ENCODE measurements at regions of chr1 and their contacts with region 1.

Region 1: DNA sequence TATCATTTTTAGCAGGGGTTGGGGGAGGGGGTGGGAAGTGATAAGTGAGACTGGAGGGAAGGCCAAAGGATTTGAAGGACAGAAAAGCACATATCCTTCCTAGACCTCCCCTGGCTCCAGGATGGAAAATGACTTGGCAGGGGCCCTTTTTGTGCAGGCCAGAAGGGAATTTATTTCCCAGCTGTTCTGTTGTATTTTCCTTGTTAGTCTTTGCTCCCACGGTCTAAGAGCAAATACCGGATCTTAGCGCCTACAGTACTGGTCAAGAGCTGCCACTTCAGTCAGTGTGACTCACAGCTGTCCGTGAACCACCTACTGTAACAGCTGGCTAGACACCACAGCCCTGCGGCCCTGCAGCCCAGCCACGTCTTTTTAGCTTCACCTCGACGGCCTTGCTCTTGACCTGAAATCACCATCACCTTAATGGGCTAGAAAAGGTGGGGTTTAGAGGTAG is 51.0 kb upstream of the ERRFI1 start:
- DNase-seq: no peak
- ATAC-seq: peak; percentile 93
- H3K4me3 ChIP-seq: no peak overlapping the region
- H3K27ac ChIP-seq: peak overlapping the region; percentile 100
- H3K4me1 ChIP-seq: peaks cover 71% of the 10 kb centered on the region
- H3K27me3 ChIP-seq: no peaks in the 10 kb centered on the region
- CTCF ChIP-seq: no peak

Region 2: DNA sequence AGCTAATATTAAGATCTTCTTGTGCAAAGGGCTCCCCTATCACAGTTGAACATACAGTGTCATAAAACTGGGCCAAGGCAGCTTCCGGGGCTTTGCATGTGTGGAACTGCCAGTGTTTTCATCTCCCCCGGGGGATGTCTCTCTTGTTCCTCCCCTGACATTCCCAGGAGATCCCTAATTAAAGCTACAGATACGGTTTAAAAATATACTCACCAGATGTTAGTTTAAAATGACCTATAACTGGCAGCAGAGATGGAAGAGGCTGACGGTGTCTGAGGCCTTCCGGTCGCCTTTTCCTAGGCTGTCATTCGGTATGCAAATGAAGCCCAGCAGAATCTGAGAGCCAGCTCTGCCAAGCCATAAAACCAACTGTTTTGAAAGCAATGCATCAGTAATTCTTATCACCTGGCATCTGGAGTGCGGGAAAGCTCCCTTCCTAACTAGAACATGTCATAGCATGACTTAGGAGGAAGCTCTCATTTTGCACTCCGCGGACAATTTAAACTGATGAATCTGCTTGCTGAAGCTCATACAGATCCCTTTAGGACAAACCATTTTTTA is 742.6 kb before region 1 on chr1:
- CTCF ChIA-PET with region 1: no interaction called
- POLR2A ChIA-PET with region 1: no interaction called
- in situ Hi-C with region 1: no loop called
- intact Hi-C with region 1: no loop called
- DNase-seq: no peak
- ATAC-seq: no peak
- H3K4me3 ChIP-seq: no peak overlapping the region
- H3K27ac ChIP-seq: no peak overlapping the region
- H3K4me1 ChIP-seq: no peaks in the 10 kb centered on the region
- H3K27me3 ChIP-seq: no peaks in the 10 kb centered on the region
- CTCF ChIP-seq: no peak

Region 3: DNA sequence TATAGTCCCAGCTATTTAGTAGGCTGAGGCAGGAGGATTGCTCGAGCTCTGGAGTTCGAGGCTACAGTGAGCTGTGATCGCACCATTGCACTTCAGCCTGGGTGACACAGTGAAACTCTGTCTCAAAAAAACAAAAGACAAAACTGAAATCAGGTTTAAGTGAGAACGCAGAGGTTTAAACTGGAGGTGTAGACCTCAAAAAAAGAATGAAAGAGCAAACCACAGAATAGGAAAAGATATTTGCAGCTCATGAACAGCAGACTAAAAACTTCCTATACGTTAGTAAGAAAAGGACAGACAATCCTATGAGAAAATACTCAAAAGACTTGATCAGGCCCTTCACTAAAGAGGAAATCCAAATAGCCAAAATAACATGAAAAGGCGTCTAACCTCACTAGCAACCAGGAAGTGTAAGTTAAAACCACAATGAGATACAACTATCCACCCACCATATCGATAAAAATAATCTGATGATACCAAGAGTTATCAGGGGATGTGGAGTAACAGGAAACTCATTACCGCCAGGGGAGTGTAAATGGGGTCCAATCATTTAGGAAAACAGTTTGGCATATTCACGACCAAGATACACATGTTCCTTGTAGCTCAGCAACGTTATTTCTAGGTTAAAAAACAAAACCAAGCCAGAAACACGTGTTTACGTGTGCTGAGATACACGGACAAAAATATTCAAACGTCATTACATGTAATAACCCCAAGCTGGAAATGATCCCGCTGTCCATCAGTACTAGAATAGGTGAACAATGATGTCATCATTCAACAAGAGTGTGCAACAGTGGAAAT is 146.3 kb before region 1 on chr1:
- CTCF ChIA-PET with region 1: no interaction called
- POLR2A ChIA-PET with region 1: no interaction called
- in situ Hi-C with region 1: no loop called
- intact Hi-C with region 1: no loop called
- DNase-seq: no peak
- ATAC-seq: no peak
- H3K4me3 ChIP-seq: no peak overlapping the region
- H3K27ac ChIP-seq: no peak overlapping the region
- H3K4me1 ChIP-seq: no peaks in the 10 kb centered on the region
- H3K27me3 ChIP-seq: no peaks in the 10 kb centered on the region
- CTCF ChIP-seq: no peak

Region 4: DNA sequence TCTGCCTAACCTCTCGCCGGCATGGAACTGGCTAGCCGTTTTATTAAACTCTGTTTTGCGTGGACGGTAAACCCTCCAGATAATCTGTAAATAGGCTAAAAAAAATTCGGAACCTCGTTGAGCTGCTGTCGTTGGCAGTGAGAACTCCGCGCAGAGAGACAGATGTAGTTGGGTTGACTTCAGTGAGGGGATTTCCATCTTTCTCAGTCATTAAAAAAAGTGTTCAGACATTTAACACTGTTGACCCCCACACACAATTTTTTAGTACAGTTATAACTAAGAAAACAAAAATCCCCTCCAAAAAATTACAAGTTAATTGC is 115.2 kb before region 1 on chr1:
- CTCF ChIA-PET with region 1: no interaction called
- POLR2A ChIA-PET with region 1: no interaction called
- in situ Hi-C with region 1: no loop called
- intact Hi-C with region 1: no loop called
- DNase-seq: no peak
- ATAC-seq: peak; percentile 2; the same call in 1 of the 2 replicates
- H3K4me3 ChIP-seq: peak overlapping the region; percentile 87 to 96
- H3K27ac ChIP-seq: peak overlapping the region; percentile 99
- H3K4me1 ChIP-seq: peaks cover 22% of the 10 kb centered on the region
- H3K27me3 ChIP-seq: no peaks in the 10 kb centered on the region
- CTCF ChIP-seq: no peak

Region 5: GRCh38 chr1:8266436-8267165 is 189.5 kb after region 1 on chr1:
- CTCF ChIA-PET with region 1: no interaction called
- POLR2A ChIA-PET with region 1: interaction called, 20 read pairs
- in situ Hi-C with region 1: no loop called
- intact Hi-C with region 1: no loop called
- DNase-seq: no peak
- ATAC-seq: no peak
- H3K4me3 ChIP-seq: no peak overlapping the region
- H3K27ac ChIP-seq: peak overlapping the region; percentile 65
- H3K4me1 ChIP-seq: 0 out of 2 replicates have a peak, but pooled peaks cover 3% of the 10 kb centered on the region
- H3K27me3 ChIP-seq: no peaks in the 10 kb centered on the region
- CTCF ChIP-seq: no peak

Region 6: GRCh38 chr1:8702850-8703810 is 626.0 kb after region 1 on chr1:
- CTCF ChIA-PET with region 1: no interaction called
- POLR2A ChIA-PET with region 1: interaction called, 10 read pairs
- in situ Hi-C with region 1: no loop called
- intact Hi-C with region 1: no loop called
- DNase-seq: peak; percentile 82
- ATAC-seq: peak; percentile 95
- H3K4me3 ChIP-seq: peak overlapping the region; percentile 63 to 78
- H3K27ac ChIP-seq: peak overlapping the region; percentile 93
- H3K4me1 ChIP-seq: peaks cover 66% of the 10 kb centered on the region
- H3K27me3 ChIP-seq: no peaks in the 10 kb centered on the region
- CTCF ChIP-seq: peak; percentile 54